B cell (primary cell): ENCODE measurements at regions of chr12 and their contacts with region 1.

Region 1: DNA sequence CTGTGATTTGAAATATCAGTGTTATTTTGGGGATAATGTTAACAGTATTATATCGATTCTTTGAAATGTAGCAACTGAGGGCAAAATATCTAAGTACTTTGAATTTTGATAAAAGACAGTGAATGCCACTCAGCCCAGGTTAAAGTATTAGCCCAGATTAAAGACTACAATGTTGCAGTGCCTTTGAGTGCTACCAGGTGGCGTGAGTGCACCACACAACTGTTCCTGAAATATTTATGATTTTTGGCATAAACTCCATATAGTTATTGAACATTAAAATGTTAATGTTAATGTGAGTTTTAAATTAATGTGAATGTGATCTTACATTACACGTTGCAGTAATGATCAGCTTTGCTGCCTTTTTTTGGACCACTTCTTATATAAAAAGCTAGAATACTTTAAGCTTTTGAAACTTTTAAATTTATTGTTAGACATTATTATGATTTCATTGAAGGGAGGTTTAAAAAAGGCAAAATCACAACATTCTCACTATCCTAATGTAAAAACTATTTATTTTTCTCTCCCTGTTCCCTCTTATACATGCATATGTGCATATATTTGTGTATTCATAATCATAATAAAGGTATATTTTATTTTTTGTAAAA is 22.5 kb downstream of the MRPS35 start:
- DNase-seq: peak; percentile 39
- ATAC-seq: no peak
- H3K4me3 ChIP-seq: no peak overlapping the region
- H3K4me3 Mint-ChIP-seq: no peak overlapping the region
- H3K27ac ChIP-seq: no peak overlapping the region
- H3K27ac Mint-ChIP-seq: no peak overlapping the region
- H3K4me1 ChIP-seq: no peaks in the 10 kb centered on the region
- H3K4me1 Mint-ChIP-seq: no peaks in the 10 kb centered on the region
- H3K27me3 ChIP-seq: no peaks in the 10 kb centered on the region
- H3K27me3 Mint-ChIP-seq: no peaks in the 10 kb centered on the region
- CTCF ChIP-seq: peak; percentile 82

Region 2: GRCh38 chr12:27226407-27226929 is 506.7 kb before region 1 on chr12:
- CTCF ChIA-PET with region 1: no interaction called
- POLR2A ChIA-PET with region 1: no interaction called
- intact Hi-C with region 1: no loop called
- DNase-seq: no peak
- ATAC-seq: no peak
- H3K4me3 ChIP-seq: no peak overlapping the region
- H3K4me3 Mint-ChIP-seq: no peak overlapping the region
- H3K27ac ChIP-seq: no peak overlapping the region
- H3K27ac Mint-ChIP-seq: no peak overlapping the region
- H3K4me1 ChIP-seq: peaks cover 10 to 12% of the 10 kb centered on the region in 2 donors
- H3K4me1 Mint-ChIP-seq: peaks cover 12% of the 10 kb centered on the region
- H3K27me3 ChIP-seq: no peaks in the 10 kb centered on the region
- H3K27me3 Mint-ChIP-seq: no peaks in the 10 kb centered on the region
- CTCF ChIP-seq: no peak

Region 3: GRCh38 chr12:27710592-27711316 is 22.4 kb before region 1 on chr12 and contains the start of gene MRPS35:
- CTCF ChIA-PET with region 1: no interaction called
- POLR2A ChIA-PET with region 1: no interaction called
- intact Hi-C with region 1: no loop called
- DNase-seq: peak; percentile 95
- ATAC-seq: peak; percentile 99
- H3K4me3 ChIP-seq: peak within 1 kb of the TSS; percentile 71 to 96 (median 92)
- H3K4me3 Mint-ChIP-seq: peak within 1 kb of the TSS; percentile 97
- H3K27ac ChIP-seq: peak within 1 kb of the TSS; percentile 68 to 80
- H3K27ac Mint-ChIP-seq: peak within 1 kb of the TSS; percentile 97
- H3K4me1 ChIP-seq: peaks cover 12 to 16% of the 10 kb centered on the region in 2 donors
- H3K4me1 Mint-ChIP-seq: peaks cover 31% of the 10 kb centered on the region
- H3K27me3 ChIP-seq: peaks cover 0 to 4% (median 0%) of the 10 kb centered on the region in 4 experiments
- H3K27me3 Mint-ChIP-seq: peaks cover 7% of the 10 kb centered on the region
- CTCF ChIP-seq: no peak
- total RNA-seq, gene MRPS35: 18.0 and 24.5 TPM in 2 replicates

Region 4: GRCh38 chr12:27779920-27780611 is 46.9 kb after region 1 on chr12 and contains the starts of genes KLHL42 and MANSC4:
- CTCF ChIA-PET with region 1: interaction called, 13 read pairs
- POLR2A ChIA-PET with region 1: no interaction called
- intact Hi-C with region 1: no loop called
- DNase-seq: peak; percentile 83
- ATAC-seq: peak; percentile 86
- H3K4me3 ChIP-seq: peak within 1 kb of the TSS; percentile 39 to 81 (median 67)
- H3K4me3 Mint-ChIP-seq: peak within 1 kb of the TSS; percentile 90
- H3K27ac ChIP-seq: peak within 1 kb of the TSS in 1 of 2 donors; percentile 69
- H3K27ac Mint-ChIP-seq: peak within 1 kb of the TSS; percentile 90
- H3K4me1 ChIP-seq: peaks cover 11 to 15% of the 10 kb centered on the region in 2 donors
- H3K4me1 Mint-ChIP-seq: peaks cover 29% of the 10 kb centered on the region
- H3K27me3 ChIP-seq: no peaks in the 10 kb centered on the region
- H3K27me3 Mint-ChIP-seq: no peaks in the 10 kb centered on the region
- CTCF ChIP-seq: no peak
- total RNA-seq, gene KLHL42: 20.5 and 21.9 TPM in 2 replicates
- total RNA-seq, gene MANSC4: not detected in 2 replicates

Region 5: DNA sequence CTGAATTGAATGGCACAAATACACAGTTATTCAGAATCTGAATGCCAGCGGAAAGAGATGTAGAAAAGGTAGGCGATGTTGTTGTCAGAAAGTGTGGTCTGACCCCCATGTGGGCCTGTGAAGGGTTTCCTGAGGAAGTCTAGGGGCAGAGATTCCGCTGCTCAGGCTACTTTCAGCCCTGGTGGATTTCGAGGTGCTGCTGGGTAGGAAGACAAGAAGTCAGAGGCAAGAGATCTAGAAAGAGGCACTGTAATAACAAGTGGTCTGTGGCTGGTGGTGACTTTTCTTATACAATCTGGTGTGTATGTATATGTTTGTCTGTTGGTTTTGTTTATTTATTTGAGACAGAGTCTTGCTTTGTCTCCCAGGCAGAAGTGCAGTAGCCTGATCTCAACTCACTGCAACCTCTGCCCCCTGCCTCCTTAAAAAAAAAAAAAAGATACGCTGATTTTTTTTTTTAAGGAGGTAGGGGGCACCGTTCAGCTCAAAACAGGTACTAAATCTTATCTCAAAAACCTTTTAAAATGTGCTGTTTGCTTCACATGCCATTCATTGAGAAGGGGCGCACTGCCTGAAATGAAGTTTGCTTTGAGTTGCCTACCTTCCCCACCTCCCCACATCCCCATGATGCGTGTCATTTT is 74.0 kb after region 1 on chr12:
- CTCF ChIA-PET with region 1: no interaction called
- POLR2A ChIA-PET with region 1: no interaction called
- intact Hi-C with region 1: no loop called
- DNase-seq: no peak
- ATAC-seq: no peak
- H3K4me3 ChIP-seq: no peak overlapping the region
- H3K4me3 Mint-ChIP-seq: no peak overlapping the region
- H3K27ac ChIP-seq: no peak overlapping the region
- H3K27ac Mint-ChIP-seq: no peak overlapping the region
- H3K4me1 ChIP-seq: no peaks in the 10 kb centered on the region
- H3K4me1 Mint-ChIP-seq: no peaks in the 10 kb centered on the region
- H3K27me3 ChIP-seq: no peaks in the 10 kb centered on the region
- H3K27me3 Mint-ChIP-seq: peaks cover 8% of the 10 kb centered on the region
- CTCF ChIP-seq: no peak

Region 6: DNA sequence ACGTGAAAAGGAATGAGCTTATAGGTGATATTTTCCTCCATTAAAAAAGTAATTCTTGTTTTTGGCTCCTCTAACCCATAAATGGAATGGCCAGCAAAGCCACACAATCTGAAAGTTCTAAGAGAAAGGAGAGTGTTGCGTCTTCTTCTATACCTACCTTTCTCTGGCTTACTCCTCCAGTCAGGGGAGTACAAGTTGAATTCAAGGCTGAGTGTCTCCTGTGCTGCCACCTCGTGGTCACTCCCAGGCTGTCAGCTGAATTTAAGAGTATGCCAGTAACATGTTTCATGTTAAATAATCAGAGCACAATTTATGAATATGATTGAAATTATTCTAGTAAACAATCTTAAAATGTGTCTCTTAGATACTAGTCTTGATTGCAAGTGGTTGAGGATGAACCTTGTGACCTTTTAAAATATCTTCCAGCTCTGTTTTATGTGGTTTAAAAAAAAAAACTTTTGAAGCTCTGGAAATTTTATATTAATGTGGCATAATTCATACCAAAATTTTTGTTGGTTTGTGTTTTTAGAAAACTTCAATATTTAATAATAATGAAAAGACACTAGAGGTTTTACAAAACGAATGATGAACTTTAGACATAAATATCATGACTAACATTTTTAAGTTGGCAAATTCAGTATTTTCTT is 207.7 kb after region 1 on chr12:
- CTCF ChIA-PET with region 1: interaction called, 59 read pairs
- POLR2A ChIA-PET with region 1: no interaction called
- intact Hi-C with region 1: no loop called
- DNase-seq: peak; percentile 67
- ATAC-seq: peak; percentile 62
- H3K4me3 ChIP-seq: no peak overlapping the region
- H3K4me3 Mint-ChIP-seq: no peak overlapping the region
- H3K27ac ChIP-seq: no peak overlapping the region
- H3K27ac Mint-ChIP-seq: no peak overlapping the region
- H3K4me1 ChIP-seq: no peaks in the 10 kb centered on the region
- H3K4me1 Mint-ChIP-seq: no peaks in the 10 kb centered on the region
- H3K27me3 ChIP-seq: peaks cover 0 to 4% (median 1%) of the 10 kb centered on the region in 4 experiments
- H3K27me3 Mint-ChIP-seq: peaks cover 3% of the 10 kb centered on the region
- CTCF ChIP-seq: peak; percentile 86

Region 7: DNA sequence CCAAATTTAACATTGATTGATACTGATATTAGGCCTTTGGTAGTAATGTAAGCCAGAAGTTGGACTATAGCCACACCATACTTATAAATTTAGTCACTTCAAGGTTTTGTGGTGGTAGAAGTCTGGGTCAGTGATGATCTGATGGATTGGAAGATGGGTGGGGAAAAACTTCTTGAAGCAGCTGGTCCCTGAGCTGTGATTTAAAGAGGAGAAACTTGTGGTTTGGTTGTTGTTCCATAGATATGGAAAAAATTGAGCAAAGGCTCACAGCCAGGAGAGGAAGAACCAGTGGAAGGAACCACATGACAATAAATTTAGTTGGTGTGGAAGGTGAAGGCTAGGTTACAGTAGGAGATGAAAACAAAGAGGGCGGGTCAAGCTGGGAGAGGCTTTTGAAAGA is 213.3 kb after region 1 on chr12:
- CTCF ChIA-PET with region 1: interaction called, 59 read pairs
- POLR2A ChIA-PET with region 1: no interaction called
- intact Hi-C with region 1: no loop called
- DNase-seq: no peak
- ATAC-seq: no peak
- H3K4me3 ChIP-seq: no peak overlapping the region
- H3K4me3 Mint-ChIP-seq: no peak overlapping the region
- H3K27ac ChIP-seq: no peak overlapping the region
- H3K27ac Mint-ChIP-seq: no peak overlapping the region
- H3K4me1 ChIP-seq: no peaks in the 10 kb centered on the region
- H3K4me1 Mint-ChIP-seq: no peaks in the 10 kb centered on the region
- H3K27me3 ChIP-seq: peaks cover 0 to 4% (median 1%) of the 10 kb centered on the region in 4 experiments
- H3K27me3 Mint-ChIP-seq: peaks cover 21% of the 10 kb centered on the region
- CTCF ChIP-seq: no peak